GM12878 (cell line): ENCODE measurements at regions of chr15 and their contacts with region 1.

Region 1: DNA sequence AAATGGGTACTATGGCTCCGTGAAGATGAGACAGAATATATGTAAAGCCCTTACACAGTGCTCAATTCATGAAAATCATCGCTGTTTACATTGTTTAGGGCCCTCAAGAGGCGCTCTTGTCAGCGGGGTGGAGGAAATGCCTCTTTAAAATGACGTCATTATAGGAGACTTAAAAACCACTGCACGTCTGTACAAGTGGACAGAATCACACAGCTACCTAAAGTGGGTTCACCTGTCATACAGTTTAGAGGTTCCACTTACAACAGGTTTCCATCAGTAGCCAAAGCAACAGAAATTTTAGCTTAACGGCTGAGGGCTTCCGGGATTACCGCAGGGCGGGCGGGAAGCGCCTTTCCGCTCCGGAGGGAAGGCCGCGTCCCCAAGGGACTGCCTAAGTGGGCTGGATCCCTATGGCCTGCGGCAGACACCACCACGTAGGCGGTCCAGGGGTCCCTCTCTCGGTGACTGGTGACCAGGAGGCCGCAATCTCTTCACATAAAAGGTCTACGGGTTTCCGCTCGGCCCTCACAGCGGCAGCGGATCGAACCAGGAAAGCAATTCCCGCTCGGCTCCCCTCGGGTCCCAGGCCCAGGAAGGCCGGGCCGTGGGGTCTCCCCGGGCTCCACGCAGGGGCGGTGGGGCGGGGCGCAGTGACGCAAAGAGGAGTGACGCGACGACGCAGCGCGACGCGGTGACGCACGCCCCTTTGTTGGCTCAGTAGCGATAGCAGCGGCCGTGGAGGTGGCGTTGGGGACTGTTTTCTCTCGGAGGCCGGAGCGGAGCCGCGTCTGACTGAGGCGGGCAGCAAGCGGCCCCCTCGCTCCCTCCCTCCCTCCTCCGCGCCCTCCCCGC is at the start of gene ARIH1:
- DNase-seq: peak; percentile 80
- ATAC-seq: peak; percentile 91
- H3K4me3 ChIP-seq: peak within 1 kb of the TSS; percentile 91
- H3K27ac ChIP-seq: peak within 1 kb of the TSS; percentile 94
- H3K4me1 ChIP-seq: peaks cover 7% of the 10 kb centered on the region
- H3K27me3 ChIP-seq: no peaks in the 10 kb centered on the region
- CTCF ChIP-seq: peak; percentile 34 to 51 (median 43); a peak in 5 of 6 replicates
- EP300 ChIP-seq: peak in 1 of 2 experiments; percentile 63; a peak in 1 of 4 replicates
- POLR2A ChIP-seq: peak; percentile 97
- RAD21 ChIP-seq: peak; percentile 58
- polyA plus RNA-seq, gene ARIH1: 14.7 to 14.9 TPM

Region 2: GRCh38 chr15:72231066-72231846 is 242.6 kb before region 1 on chr15 and contains the start of gene PKM:
- CTCF ChIA-PET with region 1: no interaction called
- POLR2A ChIA-PET with region 1: no interaction called
- RAD21 ChIA-PET with region 1: interaction called, 4 read pairs
- SMC1A ChIA-PET with region 1: no interaction called
- in situ Hi-C with region 1: no loop called
- intact Hi-C with region 1: loop called (anchors 5 kb)
- DNase-seq: peak; percentile 84
- ATAC-seq: peak; percentile 57
- H3K4me3 ChIP-seq: peak within 1 kb of the TSS; percentile 96
- H3K27ac ChIP-seq: peak within 1 kb of the TSS; percentile 97
- H3K4me1 ChIP-seq: peaks cover 5% of the 10 kb centered on the region; the same call in 1 of the 2 replicates
- H3K27me3 ChIP-seq: no peaks in the 10 kb centered on the region
- CTCF ChIP-seq: no peak
- EP300 ChIP-seq: peak; percentile 24 to 34; a peak in 1 of 4 replicates
- POLR2A ChIP-seq: peak; percentile 95
- RAD21 ChIP-seq: no peak
- polyA plus RNA-seq, gene PKM: 491 to 500 TPM

Region 3: GRCh38 chr15:72375847-72376581 is 97.8 kb before region 1 on chr15 and contains the start of gene HEXA:
- CTCF ChIA-PET with region 1: interaction called, 4 read pairs
- POLR2A ChIA-PET with region 1: no interaction called
- RAD21 ChIA-PET with region 1: no interaction called
- SMC1A ChIA-PET with region 1: no interaction called
- in situ Hi-C with region 1: no loop called
- intact Hi-C with region 1: loop called (anchors 5 kb)
- DNase-seq: peak; percentile 84
- ATAC-seq: peak; percentile 92
- H3K4me3 ChIP-seq: peak within 1 kb of the TSS; percentile 88
- H3K27ac ChIP-seq: peak within 1 kb of the TSS; percentile 87
- H3K4me1 ChIP-seq: peaks cover 20% of the 10 kb centered on the region
- H3K27me3 ChIP-seq: no peaks in the 10 kb centered on the region
- CTCF ChIP-seq: no peak
- EP300 ChIP-seq: peak in 1 of 2 experiments; percentile 53; a peak in 1 of 4 replicates
- POLR2A ChIP-seq: peak; percentile 94
- RAD21 ChIP-seq: no peak
- polyA plus RNA-seq, gene HEXA: 24.5 to 38.5 TPM

Region 4: GRCh38 chr15:72404841-72405240 is 69.0 kb before region 1 on chr15:
- CTCF ChIA-PET with region 1: no interaction called
- POLR2A ChIA-PET with region 1: no interaction called
- RAD21 ChIA-PET with region 1: no interaction called
- SMC1A ChIA-PET with region 1: no interaction called
- in situ Hi-C with region 1: no loop called
- intact Hi-C with region 1: no loop called
- DNase-seq: no peak
- ATAC-seq: no peak
- H3K4me3 ChIP-seq: no peak overlapping the region
- H3K27ac ChIP-seq: no peak overlapping the region
- H3K4me1 ChIP-seq: no peaks in the 10 kb centered on the region
- H3K27me3 ChIP-seq: peaks cover 2 to 3% of the 10 kb centered on the region in 2 experiments; a peak in 3 of 4 replicates
- CTCF ChIP-seq: no peak
- EP300 ChIP-seq: no peak
- POLR2A ChIP-seq: no peak
- RAD21 ChIP-seq: no peak

Region 5: GRCh38 chr15:72495007-72495406 is 21.2 kb after region 1 on chr15:
- CTCF ChIA-PET with region 1: interaction called, 14 read pairs
- POLR2A ChIA-PET with region 1: interaction called, 7 read pairs
- RAD21 ChIA-PET with region 1: no interaction called
- SMC1A ChIA-PET with region 1: interaction called, 5 read pairs
- in situ Hi-C with region 1: no loop called
- intact Hi-C with region 1: no loop called
- DNase-seq: no peak
- ATAC-seq: peak; percentile 85
- H3K4me3 ChIP-seq: no peak overlapping the region
- H3K27ac ChIP-seq: no peak overlapping the region
- H3K4me1 ChIP-seq: no peaks in the 10 kb centered on the region
- H3K27me3 ChIP-seq: no peaks in the 10 kb centered on the region
- CTCF ChIP-seq: no peak
- EP300 ChIP-seq: no peak
- POLR2A ChIP-seq: no peak
- RAD21 ChIP-seq: no peak

Region 6: GRCh38 chr15:72532991-72533601 is 59.3 kb after region 1 on chr15:
- CTCF ChIA-PET with region 1: interaction called, 14 read pairs
- POLR2A ChIA-PET with region 1: no interaction called
- RAD21 ChIA-PET with region 1: interaction called, 5 read pairs
- SMC1A ChIA-PET with region 1: interaction called, 4 read pairs
- in situ Hi-C with region 1: no loop called
- intact Hi-C with region 1: no loop called
- DNase-seq: no peak
- ATAC-seq: peak; percentile 74
- H3K4me3 ChIP-seq: no peak overlapping the region
- H3K27ac ChIP-seq: no peak overlapping the region
- H3K4me1 ChIP-seq: no peaks in the 10 kb centered on the region
- H3K27me3 ChIP-seq: no peaks in the 10 kb centered on the region
- CTCF ChIP-seq: peak; percentile 20 to 44 (median 40); a peak in 4 of 6 replicates
- EP300 ChIP-seq: no peak
- POLR2A ChIP-seq: no peak
- RAD21 ChIP-seq: peak; percentile 29; the same call in 1 of the 2 replicates